ENCODE measurements at regions of chr15 and their contacts with region 1.

Region 1: GRCh38 chr15:99565299-99566156 is at the start of gene MEF2A:
- DNase-seq: peak; percentile 91 to 94 (median 92)
- ATAC-seq: peak; percentile 87
- H3K4me3 ChIP-seq: peak within 1 kb of the TSS; percentile 84
- H3K27ac ChIP-seq: peak within 1 kb of the TSS; percentile 91
- H3K4me1 ChIP-seq: peaks cover 16 to 23% of the 10 kb centered on the region in 2 experiments; a peak in 4 of 5 replicates
- H3K27me3 ChIP-seq: peaks cover 4 to 8% of the 10 kb centered on the region in 2 experiments; a peak in 4 of 5 replicates
- CTCF ChIP-seq: no peak
- EP300 ChIP-seq: peak; percentile 32
- POLR2A ChIP-seq: peak; percentile 66
- RAD21 ChIP-seq: peak in 1 of 2 experiments; percentile 4; a peak in 1 of 4 replicates
- polyA plus RNA-seq, gene MEF2A: 1.6 to 2.1 TPM

Region 2: GRCh38 chr15:99213187-99213811 is 352.2 kb before region 1 on chr15:
- CTCF ChIA-PET with region 1: no interaction called
- POLR2A ChIA-PET with region 1: no interaction called
- in situ Hi-C with region 1: no loop called
- intact Hi-C with region 1: no loop called
- DNase-seq: peak; percentile 47 to 69 (median 50)
- ATAC-seq: peak; percentile 95
- H3K4me3 ChIP-seq: no peak overlapping the region
- H3K27ac ChIP-seq: no peak overlapping the region
- H3K4me1 ChIP-seq: no peaks in the 10 kb centered on the region
- H3K27me3 ChIP-seq: no peaks in the 10 kb centered on the region
- CTCF ChIP-seq: peak; percentile 76 to 89 (median 87)
- EP300 ChIP-seq: no peak
- POLR2A ChIP-seq: no peak
- RAD21 ChIP-seq: peak; percentile 77 to 91

Region 3: DNA sequence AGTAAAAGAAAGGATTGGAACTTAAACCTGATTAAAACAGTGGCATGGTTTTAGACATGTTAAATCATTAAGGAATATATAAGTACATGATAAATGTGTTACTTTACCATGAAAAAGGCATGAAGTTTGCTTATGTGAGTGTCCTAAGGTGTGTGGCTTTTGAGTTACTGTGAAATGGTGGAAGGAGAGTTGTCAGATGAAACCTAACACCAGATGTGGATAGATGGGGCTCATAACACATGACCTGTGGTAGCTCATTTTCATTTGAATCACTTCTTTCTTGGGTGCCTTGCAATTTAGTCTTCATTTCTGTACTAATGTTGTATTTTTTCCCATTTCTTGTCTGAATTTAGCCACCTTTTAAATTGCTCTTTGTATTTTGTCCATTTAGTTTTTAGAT is 13.3 kb after region 1 on chr15:
- CTCF ChIA-PET with region 1: no interaction called
- POLR2A ChIA-PET with region 1: interaction called, 15 read pairs
- in situ Hi-C with region 1: no loop called
- intact Hi-C with region 1: no loop called
- DNase-seq: peak in 1 of 4 experiments; percentile 45
- ATAC-seq: peak; percentile 72
- H3K4me3 ChIP-seq: no peak overlapping the region
- H3K27ac ChIP-seq: no peak overlapping the region
- H3K4me1 ChIP-seq: peaks cover 0 to 16% of the 10 kb centered on the region in 2 experiments; a peak in 2 of 5 replicates
- H3K27me3 ChIP-seq: no peaks in the 10 kb centered on the region
- CTCF ChIP-seq: no peak
- EP300 ChIP-seq: no peak
- POLR2A ChIP-seq: no peak
- RAD21 ChIP-seq: no peak

Region 4: GRCh38 chr15:99613887-99614647 is 48.5 kb after region 1 on chr15:
- CTCF ChIA-PET with region 1: no interaction called
- POLR2A ChIA-PET with region 1: interaction called, 6 read pairs
- in situ Hi-C with region 1: no loop called
- intact Hi-C with region 1: loop called (anchors 5 kb)
- DNase-seq: no peak
- ATAC-seq: no peak
- H3K4me3 ChIP-seq: no peak overlapping the region
- H3K27ac ChIP-seq: no peak overlapping the region
- H3K4me1 ChIP-seq: peaks cover 0 to 17% of the 10 kb centered on the region in 2 experiments; a peak in 2 of 5 replicates
- H3K27me3 ChIP-seq: no peaks in the 10 kb centered on the region
- CTCF ChIP-seq: no peak
- EP300 ChIP-seq: no peak
- POLR2A ChIP-seq: no peak
- RAD21 ChIP-seq: 0 out of 4 replicates have a peak, but pooled peaks of 1 of the 2 experiments have one; percentile 6